ENCODE measurements at regions of chr11 and their contacts with region 1.

Region 1: DNA sequence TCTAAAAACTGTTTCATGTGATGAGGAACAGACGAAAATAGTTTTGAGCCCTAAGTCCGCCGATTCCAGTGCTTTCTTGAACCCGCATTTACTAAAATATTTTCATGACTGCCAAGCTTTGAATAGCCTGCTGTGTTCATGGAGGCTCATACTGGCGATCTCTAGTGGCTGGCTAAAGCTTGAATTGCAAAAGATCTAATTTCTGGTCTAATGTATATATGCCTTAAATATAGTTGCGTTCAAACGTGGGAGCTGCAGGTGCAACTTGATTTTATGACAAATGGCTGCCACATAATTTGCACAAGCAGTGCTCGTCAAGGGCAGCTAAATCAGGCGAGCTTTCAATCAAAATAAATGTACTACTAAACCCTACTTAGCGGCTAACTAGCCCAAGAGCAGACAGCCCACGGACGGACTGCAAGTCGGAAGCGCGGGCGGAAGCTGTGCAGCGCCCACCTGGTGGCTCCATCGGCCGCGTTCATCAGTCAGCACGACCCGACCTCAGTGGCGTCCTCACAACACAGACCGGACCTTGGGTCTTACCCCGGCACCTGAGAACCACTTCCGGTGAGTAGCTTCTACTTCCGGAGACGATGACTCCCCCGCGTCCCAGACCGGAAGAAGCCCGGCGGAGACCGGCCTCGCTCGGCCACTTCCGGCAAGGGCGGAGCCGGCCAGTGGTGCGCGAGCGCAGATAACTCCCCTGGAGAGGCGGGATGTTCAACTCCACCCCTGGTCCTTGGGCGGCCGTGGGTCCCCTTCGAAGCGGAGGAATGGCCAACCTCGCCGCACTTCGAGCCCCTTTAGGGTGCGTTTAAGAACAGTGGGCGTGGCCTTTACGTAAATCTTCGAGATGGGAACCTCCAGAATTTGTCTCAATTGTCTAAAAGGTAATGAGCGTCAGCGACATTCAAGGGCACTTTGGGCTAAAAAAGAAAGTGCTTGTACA is 6.1 kb downstream of the RPL27A start:
- DNase-seq: peak; percentile 97
- H3K4me3 Mint-ChIP-seq: peak overlapping the region; percentile 75
- H3K27ac Mint-ChIP-seq: peak overlapping the region; percentile 87
- H3K4me1 Mint-ChIP-seq: peaks cover 33% of the 10 kb centered on the region
- H3K27me3 Mint-ChIP-seq: no peaks in the 10 kb centered on the region
- CTCF ChIP-seq: no peak

Region 2: GRCh38 chr11:8333811-8334401 is 354.8 kb before region 1 on chr11:
- CTCF ChIA-PET with region 1: no interaction called
- POLR2A ChIA-PET with region 1: no interaction called
- intact Hi-C with region 1: loop called (anchors 5 kb)
- DNase-seq: peak; percentile 93
- H3K4me3 Mint-ChIP-seq: no peak overlapping the region
- H3K27ac Mint-ChIP-seq: no peak overlapping the region
- H3K4me1 Mint-ChIP-seq: peaks cover 21% of the 10 kb centered on the region
- H3K27me3 Mint-ChIP-seq: no peaks in the 10 kb centered on the region
- CTCF ChIP-seq: peak; percentile 33

Region 3: GRCh38 chr11:8717876-8718753 is 29.4 kb after region 1 on chr11:
- CTCF ChIA-PET with region 1: no interaction called
- POLR2A ChIA-PET with region 1: interaction called, 19 read pairs
- intact Hi-C with region 1: no loop called
- DNase-seq: peak; percentile 78
- H3K4me3 Mint-ChIP-seq: peak overlapping the region; percentile 15
- H3K27ac Mint-ChIP-seq: peak overlapping the region; percentile 71
- H3K4me1 Mint-ChIP-seq: peaks cover 43% of the 10 kb centered on the region
- H3K27me3 Mint-ChIP-seq: no peaks in the 10 kb centered on the region
- CTCF ChIP-seq: no peak

Region 4: DNA sequence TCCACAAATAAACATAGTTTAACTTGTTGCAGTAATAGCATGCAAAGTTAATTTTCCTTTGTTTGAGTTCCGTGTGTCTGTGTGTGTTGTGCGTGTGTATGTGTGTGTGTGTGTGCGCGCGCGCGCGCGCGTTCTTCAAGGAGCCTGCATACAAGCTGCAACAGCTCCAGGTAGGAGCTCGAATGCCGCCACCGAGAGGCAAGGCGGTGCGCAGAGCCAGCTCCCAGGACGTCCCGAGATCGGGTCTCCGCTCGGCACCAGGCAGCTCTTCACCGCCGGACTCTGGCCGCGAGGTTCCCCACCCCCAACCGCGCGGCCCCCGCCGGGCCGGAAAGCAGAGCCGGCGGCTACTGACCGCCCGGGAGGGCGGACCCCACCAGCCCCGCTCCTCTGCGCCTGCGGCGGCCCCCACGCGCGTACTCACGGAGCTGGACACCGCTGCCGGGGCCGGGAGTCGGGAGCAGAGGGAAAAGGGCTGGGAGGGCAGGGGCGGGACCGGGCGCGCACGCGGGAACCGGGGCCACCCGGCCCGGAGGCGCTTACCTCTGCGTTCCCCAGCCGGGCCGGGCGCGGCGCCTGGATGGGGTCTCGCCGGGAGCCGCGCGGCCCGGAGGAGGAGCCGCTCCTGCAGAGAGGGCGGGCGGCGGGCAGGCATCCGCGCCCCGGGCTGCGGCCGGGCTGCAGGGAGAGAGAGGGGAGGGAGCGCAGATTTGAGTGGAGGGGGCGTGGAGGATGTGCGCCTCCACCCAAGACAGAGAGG is 181.9 kb after region 1 on chr11:
- CTCF ChIA-PET with region 1: interaction called, 4 read pairs
- POLR2A ChIA-PET with region 1: interaction called, 32 read pairs
- intact Hi-C with region 1: no loop called
- DNase-seq: peak; percentile 59
- H3K4me3 Mint-ChIP-seq: peak overlapping the region; percentile 78
- H3K27ac Mint-ChIP-seq: no peak overlapping the region
- H3K4me1 Mint-ChIP-seq: peaks cover 10% of the 10 kb centered on the region
- H3K27me3 Mint-ChIP-seq: no peaks in the 10 kb centered on the region
- CTCF ChIP-seq: no peak